HepG2 (cell line): ENCODE measurements at regions of chr1 and their contacts with region 1.

Region 1: DNA sequence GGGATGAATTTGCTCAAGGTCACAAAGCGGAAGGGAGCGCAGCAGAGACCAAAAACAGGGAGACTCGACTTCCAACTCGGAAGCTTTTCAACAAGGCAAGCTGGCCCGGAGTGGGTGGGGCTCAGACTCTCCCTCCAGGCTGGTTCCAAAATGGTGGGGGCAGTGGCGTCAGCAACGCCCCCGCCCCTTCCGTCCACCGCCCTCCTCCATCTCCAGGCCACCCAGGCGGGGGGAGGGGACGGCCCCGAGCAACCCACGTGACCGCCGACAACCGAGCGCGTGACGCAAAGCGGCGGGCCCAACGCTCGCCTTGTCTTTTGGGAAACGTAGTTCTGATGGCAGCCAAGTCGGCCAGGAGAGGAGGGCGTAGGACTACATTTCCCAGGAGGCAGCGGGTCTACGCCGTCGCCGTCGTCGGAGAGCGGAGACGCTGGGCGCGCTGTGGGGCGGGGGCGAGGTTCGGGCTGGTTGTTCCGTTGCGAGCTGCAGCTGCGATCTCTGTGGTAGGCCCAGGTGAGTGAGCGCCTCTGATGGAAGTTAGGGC is at the start of gene THRAP3:
- DNase-seq: peak; percentile 98
- ATAC-seq: peak; percentile 96
- H3K4me3 ChIP-seq: peak within 1 kb of the TSS; percentile 86 to 100 (median 89)
- H3K27ac ChIP-seq: peak within 1 kb of the TSS; percentile 94
- H3K4me1 ChIP-seq: peaks cover 37% of the 10 kb centered on the region
- H3K27me3 ChIP-seq: no peaks in the 10 kb centered on the region; a peak in 1 of 5 replicates
- CTCF ChIP-seq: peak; percentile 27; the same call in 1 of the 2 replicates
- EP300 ChIP-seq: peak; percentile 19 to 24; a peak in 2 of 4 replicates
- POLR2A ChIP-seq: peak; percentile 82 to 93
- RAD21 ChIP-seq: no peak; the same call in 1 of the 2 replicates
- total RNA-seq, gene THRAP3: 92.6 and 127 TPM in 2 replicates

Region 2: GRCh38 chr1:36008546-36009197 is 215.4 kb before region 1 on chr1:
- CTCF ChIA-PET with region 1: no interaction called
- POLR2A ChIA-PET with region 1: no interaction called
- in situ Hi-C with region 1: no loop called
- intact Hi-C with region 1: no loop called
- DNase-seq: peak; percentile 12
- ATAC-seq: no peak
- H3K4me3 ChIP-seq: no peak overlapping the region
- H3K27ac ChIP-seq: no peak overlapping the region
- H3K4me1 ChIP-seq: no peaks in the 10 kb centered on the region
- H3K27me3 ChIP-seq: no peaks in the 10 kb centered on the region
- CTCF ChIP-seq: no peak
- EP300 ChIP-seq: no peak
- POLR2A ChIP-seq: no peak
- RAD21 ChIP-seq: no peak

Region 3: GRCh38 chr1:36040238-36040637 is 183.8 kb before region 1 on chr1:
- CTCF ChIA-PET with region 1: no interaction called
- POLR2A ChIA-PET with region 1: no interaction called
- in situ Hi-C with region 1: no loop called
- intact Hi-C with region 1: no loop called
- DNase-seq: no peak
- ATAC-seq: no peak
- H3K4me3 ChIP-seq: no peak overlapping the region
- H3K27ac ChIP-seq: no peak overlapping the region
- H3K4me1 ChIP-seq: no peaks in the 10 kb centered on the region
- H3K27me3 ChIP-seq: no peaks in the 10 kb centered on the region
- CTCF ChIP-seq: no peak
- EP300 ChIP-seq: no peak
- POLR2A ChIP-seq: no peak
- RAD21 ChIP-seq: no peak

Region 4: DNA sequence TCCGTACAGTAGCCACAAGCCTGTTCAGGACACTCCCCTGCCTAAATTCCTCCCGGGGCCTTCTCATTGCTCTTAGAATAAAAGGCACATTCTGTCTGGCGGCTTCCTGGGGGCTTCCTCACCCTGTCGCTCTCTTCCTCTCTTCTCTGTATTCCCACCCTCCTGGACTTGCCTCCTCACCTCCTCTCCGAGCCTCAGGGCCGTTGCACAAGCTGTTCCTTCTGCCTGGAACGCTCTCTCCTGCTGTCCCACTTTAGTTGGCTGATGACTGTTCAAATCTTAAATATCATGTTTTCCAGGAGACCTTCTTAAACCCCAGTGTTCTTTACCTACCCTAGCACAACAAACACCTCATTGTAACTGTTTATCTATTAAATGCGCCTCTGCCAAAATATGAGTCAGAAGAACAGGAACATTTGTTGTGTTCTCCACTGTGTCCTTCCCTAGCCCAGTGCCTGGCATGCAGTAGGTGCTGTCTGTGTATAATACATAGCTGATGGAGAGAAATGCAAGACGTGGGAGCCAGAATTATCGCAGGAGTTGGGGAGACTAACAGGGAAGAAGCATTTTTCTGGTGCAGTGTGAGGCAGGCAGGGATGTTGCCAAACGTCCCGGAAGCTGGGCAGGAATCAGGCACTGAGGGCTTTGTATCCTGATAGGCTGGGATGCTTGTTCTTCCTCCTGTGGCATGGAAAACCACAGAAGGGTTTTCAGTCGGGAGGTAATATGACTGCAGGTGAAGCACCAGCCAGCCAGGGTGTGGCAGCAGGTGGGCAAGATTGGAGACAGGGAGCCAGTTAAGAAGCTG is 23.9 kb before region 1 on chr1:
- CTCF ChIA-PET with region 1: no interaction called
- POLR2A ChIA-PET with region 1: interaction called, 11 read pairs
- in situ Hi-C with region 1: no loop called
- intact Hi-C with region 1: no loop called
- DNase-seq: no peak
- ATAC-seq: peak; percentile 42
- H3K4me3 ChIP-seq: no peak overlapping the region
- H3K27ac ChIP-seq: no peak overlapping the region
- H3K4me1 ChIP-seq: peaks cover 36% of the 10 kb centered on the region
- H3K27me3 ChIP-seq: no peaks in the 10 kb centered on the region
- CTCF ChIP-seq: no peak
- EP300 ChIP-seq: no peak
- POLR2A ChIP-seq: no peak
- RAD21 ChIP-seq: no peak

Region 5: DNA sequence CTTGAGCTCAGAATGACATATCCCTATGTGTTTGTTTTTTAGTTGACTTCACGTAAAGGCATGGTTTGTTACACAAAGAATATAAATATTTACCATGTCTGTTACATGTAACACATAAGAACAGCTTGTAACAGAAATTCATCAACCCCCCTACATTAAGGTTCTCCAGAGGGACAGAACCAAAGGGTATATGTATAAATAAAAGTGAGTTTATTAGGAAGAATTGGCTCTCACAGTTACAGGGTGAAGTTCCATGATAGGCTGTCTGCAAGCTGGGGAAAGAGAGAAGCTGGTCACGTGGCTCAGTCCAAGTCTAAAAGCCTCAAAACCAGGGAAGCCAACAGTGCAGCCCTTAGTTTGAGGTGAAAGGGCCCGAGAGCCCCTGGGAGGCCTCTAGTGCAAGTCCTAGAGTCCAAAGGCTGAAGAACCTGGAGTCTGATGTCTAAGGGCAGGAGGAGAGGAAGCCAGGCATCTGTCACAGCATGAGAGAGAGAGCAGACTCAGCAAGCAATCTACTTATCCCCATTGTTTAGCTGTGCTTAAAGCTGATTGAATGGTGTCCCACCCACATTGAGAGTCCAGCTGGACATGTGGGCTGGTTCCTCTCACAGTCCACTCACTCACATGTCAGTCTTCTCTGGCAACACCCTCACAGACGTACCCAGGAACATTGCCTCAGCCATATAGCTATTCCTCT is 16.0 kb after region 1 on chr1:
- CTCF ChIA-PET with region 1: no interaction called
- POLR2A ChIA-PET with region 1: interaction called, 141 read pairs
- in situ Hi-C with region 1: no loop called
- intact Hi-C with region 1: loop called (anchors 2 kb)
- DNase-seq: peak; percentile 93
- ATAC-seq: peak; percentile 96
- H3K4me3 ChIP-seq: peak overlapping the region in 2 of 3 experiments; percentile 26 to 29; a peak in 3 of 6 replicates
- H3K27ac ChIP-seq: peak overlapping the region; percentile 89
- H3K4me1 ChIP-seq: peaks cover 94% of the 10 kb centered on the region
- H3K27me3 ChIP-seq: no peaks in the 10 kb centered on the region
- CTCF ChIP-seq: no peak
- EP300 ChIP-seq: peak in 1 of 2 experiments; percentile 72; a peak in 2 of 4 replicates
- POLR2A ChIP-seq: peak; percentile 34 to 65; a peak in 2 of 4 replicates
- RAD21 ChIP-seq: peak; percentile 21; the same call in 1 of the 2 replicates

Region 6: DNA sequence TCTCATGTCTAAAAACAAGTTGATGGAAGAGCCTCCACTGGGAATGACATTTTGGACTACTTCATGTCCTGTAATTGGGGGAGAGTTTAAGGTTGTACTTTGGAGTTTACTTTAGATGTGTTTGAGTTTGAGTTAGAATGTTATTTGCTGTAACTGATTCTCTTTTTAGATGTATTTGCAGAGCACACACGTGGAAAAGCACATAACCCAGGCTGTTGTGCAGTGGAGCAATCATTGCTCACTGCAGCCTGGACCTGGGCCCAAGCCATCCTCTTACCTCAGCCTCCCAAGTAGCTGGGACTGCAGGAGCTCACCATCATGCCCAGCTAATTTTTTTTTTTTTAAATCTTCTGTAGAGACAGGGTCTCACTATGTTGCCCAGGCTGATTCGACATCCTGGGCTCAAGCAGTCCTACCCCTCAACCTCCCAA is 45.4 kb after region 1 on chr1:
- CTCF ChIA-PET with region 1: no interaction called
- POLR2A ChIA-PET with region 1: interaction called, 46 read pairs
- in situ Hi-C with region 1: no loop called
- intact Hi-C with region 1: loop called (anchors 5 kb)
- DNase-seq: peak; percentile 94
- ATAC-seq: peak; percentile 99
- H3K4me3 ChIP-seq: peak overlapping the region in 2 of 3 experiments; percentile 28 to 32; a peak in 2 of 6 replicates
- H3K27ac ChIP-seq: peak overlapping the region; percentile 85
- H3K4me1 ChIP-seq: peaks cover 76% of the 10 kb centered on the region
- H3K27me3 ChIP-seq: no peaks in the 10 kb centered on the region
- CTCF ChIP-seq: no peak
- EP300 ChIP-seq: peak; percentile 88 to 93; a peak in 3 of 4 replicates
- POLR2A ChIP-seq: no peak
- RAD21 ChIP-seq: no peak

Region 7: GRCh38 chr1:36306902-36307456 is 82.9 kb after region 1 on chr1:
- CTCF ChIA-PET with region 1: no interaction called
- POLR2A ChIA-PET with region 1: interaction called, 12 read pairs
- in situ Hi-C with region 1: no loop called
- intact Hi-C with region 1: no loop called
- DNase-seq: peak; percentile 90
- ATAC-seq: peak; percentile 94
- H3K4me3 ChIP-seq: peak overlapping the region; percentile 82 to 88 (median 85)
- H3K27ac ChIP-seq: peak overlapping the region; percentile 88
- H3K4me1 ChIP-seq: peaks cover 29% of the 10 kb centered on the region
- H3K27me3 ChIP-seq: no peaks in the 10 kb centered on the region
- CTCF ChIP-seq: peak; percentile 31; the same call in 1 of the 2 replicates
- EP300 ChIP-seq: no peak
- POLR2A ChIP-seq: peak; percentile 96 to 99
- RAD21 ChIP-seq: no peak

Region 8: DNA sequence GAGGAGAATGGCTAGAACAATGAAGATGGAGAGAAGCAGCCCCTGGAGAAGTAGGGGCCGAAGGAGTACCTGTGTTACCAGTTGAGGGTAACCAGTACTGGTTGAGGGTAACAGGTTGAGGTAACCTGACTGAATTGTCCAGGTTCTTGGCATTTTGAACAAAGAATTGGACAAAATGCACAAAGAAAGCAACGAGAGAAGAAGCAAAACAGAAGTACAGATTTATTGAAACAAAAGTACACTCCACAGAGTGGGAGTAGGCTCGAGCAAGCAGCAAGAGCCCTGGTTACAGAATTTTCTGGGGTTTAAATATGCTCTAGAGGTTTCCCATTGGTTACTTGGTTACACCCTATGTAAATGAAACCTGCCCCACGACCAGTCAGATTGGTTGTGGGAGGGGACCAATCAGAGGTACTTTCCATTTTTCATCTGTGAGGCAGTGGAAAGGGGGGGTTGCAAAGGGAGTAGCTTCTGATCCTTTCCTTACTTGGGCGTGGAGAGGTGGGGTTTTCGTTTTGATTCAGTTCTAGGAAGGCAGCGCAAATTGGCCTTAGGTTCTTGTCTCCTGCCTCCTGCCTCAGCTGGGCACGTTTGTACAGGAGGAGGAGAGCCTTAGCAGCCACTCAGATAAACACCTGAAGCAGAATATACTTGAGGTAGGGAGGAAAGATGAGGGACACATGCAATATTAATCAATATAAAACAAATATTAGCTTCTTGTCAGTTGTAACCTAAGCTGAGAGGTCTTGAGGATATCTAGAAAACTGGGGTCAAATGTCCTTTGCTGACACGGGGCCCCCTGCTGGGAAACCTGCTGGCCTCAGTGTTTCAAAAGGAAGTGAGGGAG is 187.8 kb after region 1 on chr1:
- CTCF ChIA-PET with region 1: no interaction called
- POLR2A ChIA-PET with region 1: no interaction called
- in situ Hi-C with region 1: no loop called
- intact Hi-C with region 1: no loop called
- DNase-seq: peak; percentile 17
- ATAC-seq: peak; percentile 56
- H3K4me3 ChIP-seq: no peak overlapping the region
- H3K27ac ChIP-seq: no peak overlapping the region
- H3K4me1 ChIP-seq: no peaks in the 10 kb centered on the region
- H3K27me3 ChIP-seq: no peaks in the 10 kb centered on the region
- CTCF ChIP-seq: peak; percentile 24; the same call in 1 of the 2 replicates
- EP300 ChIP-seq: no peak
- POLR2A ChIP-seq: no peak
- RAD21 ChIP-seq: no peak